ENCODE measurements at regions of chr14 and their contacts with region 1.

Region 1: GRCh38 chr14:94129111-94129757 is at the start of gene IFI27L2:
- DNase-seq: peak; percentile 80
- ATAC-seq: peak; percentile 98
- H3K4me3 ChIP-seq: peak within 1 kb of the TSS; percentile 57 to 85 (median 65)
- H3K4me3 Mint-ChIP-seq: peak within 1 kb of the TSS; percentile 94
- H3K27ac ChIP-seq: peak within 1 kb of the TSS; percentile 35 to 44
- H3K27ac Mint-ChIP-seq: peak within 1 kb of the TSS; percentile 68
- H3K4me1 ChIP-seq: peaks cover 12 to 18% of the 10 kb centered on the region in 2 donors
- H3K4me1 Mint-ChIP-seq: peaks cover 14% of the 10 kb centered on the region
- H3K27me3 ChIP-seq: peaks cover 0 to 4% (median 0%) of the 10 kb centered on the region in 4 experiments
- H3K27me3 Mint-ChIP-seq: peaks cover 10% of the 10 kb centered on the region
- CTCF ChIP-seq: peak; percentile 45
- total RNA-seq, gene IFI27L2: 30.2 and 31.4 TPM in 2 replicates

Region 2: GRCh38 chr14:93655078-93655750 is 474.0 kb before region 1 on chr14:
- CTCF ChIA-PET with region 1: no interaction called
- POLR2A ChIA-PET with region 1: no interaction called
- intact Hi-C with region 1: loop called (anchors 5 kb)
- DNase-seq: peak; percentile 12
- ATAC-seq: no peak
- H3K4me3 ChIP-seq: no peak overlapping the region
- H3K4me3 Mint-ChIP-seq: no peak overlapping the region
- H3K27ac ChIP-seq: no peak overlapping the region
- H3K27ac Mint-ChIP-seq: no peak overlapping the region
- H3K4me1 ChIP-seq: no peaks in the 10 kb centered on the region
- H3K4me1 Mint-ChIP-seq: no peaks in the 10 kb centered on the region
- H3K27me3 ChIP-seq: peaks cover 0 to 12% (median 5%) of the 10 kb centered on the region in 4 experiments
- H3K27me3 Mint-ChIP-seq: peaks cover 27% of the 10 kb centered on the region
- CTCF ChIP-seq: peak; percentile 56

Region 3: GRCh38 chr14:93959239-93960107 is 169.8 kb before region 1 on chr14:
- CTCF ChIA-PET with region 1: no interaction called
- POLR2A ChIA-PET with region 1: no interaction called
- intact Hi-C with region 1: loop called (anchors 5 kb)
- DNase-seq: peak; percentile 92
- ATAC-seq: peak; percentile 71
- H3K4me3 ChIP-seq: peak overlapping the region in 1 of 5 experiments; percentile 19
- H3K4me3 Mint-ChIP-seq: peak overlapping the region; percentile 78
- H3K27ac ChIP-seq: peak overlapping the region; percentile 68 to 75
- H3K27ac Mint-ChIP-seq: peak overlapping the region; percentile 95
- H3K4me1 ChIP-seq: peaks cover 96 to 97% of the 10 kb centered on the region in 2 donors
- H3K4me1 Mint-ChIP-seq: peaks cover 92% of the 10 kb centered on the region
- H3K27me3 ChIP-seq: no peaks in the 10 kb centered on the region
- H3K27me3 Mint-ChIP-seq: no peaks in the 10 kb centered on the region
- CTCF ChIP-seq: no peak

Region 4: GRCh38 chr14:94117856-94118255 is 11.4 kb before region 1 on chr14:
- CTCF ChIA-PET with region 1: interaction called, 10 read pairs
- POLR2A ChIA-PET with region 1: no interaction called
- intact Hi-C with region 1: no loop called
- DNase-seq: no peak
- ATAC-seq: no peak
- H3K4me3 ChIP-seq: no peak overlapping the region
- H3K4me3 Mint-ChIP-seq: no peak overlapping the region
- H3K27ac ChIP-seq: no peak overlapping the region
- H3K27ac Mint-ChIP-seq: no peak overlapping the region
- H3K4me1 ChIP-seq: no peaks in the 10 kb centered on the region
- H3K4me1 Mint-ChIP-seq: no peaks in the 10 kb centered on the region
- H3K27me3 ChIP-seq: peaks cover 0 to 31% (median 0%) of the 10 kb centered on the region in 4 experiments
- H3K27me3 Mint-ChIP-seq: peaks cover 52% of the 10 kb centered on the region
- CTCF ChIP-seq: no peak

Region 5: DNA sequence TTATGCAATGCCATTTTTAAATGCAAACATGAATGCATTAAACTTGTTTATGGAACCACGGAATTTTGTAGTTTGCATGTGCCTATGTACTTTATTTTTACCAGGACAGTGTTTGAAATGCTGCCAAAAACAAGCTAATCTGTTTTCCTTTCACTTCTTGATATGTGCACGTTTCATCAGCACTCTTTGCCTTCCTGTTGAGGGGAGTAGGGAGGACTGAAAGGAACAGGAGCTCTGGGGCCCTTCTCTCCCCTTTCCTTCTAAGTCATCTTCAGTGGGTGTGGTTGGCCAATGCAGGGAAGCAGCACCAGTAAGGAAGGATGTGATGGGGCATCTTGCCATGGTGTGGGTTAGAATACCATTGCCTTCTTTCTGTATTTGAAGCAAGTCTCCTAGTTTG is 32.7 kb after region 1 on chr14:
- CTCF ChIA-PET with region 1: interaction called, 3 read pairs
- POLR2A ChIA-PET with region 1: interaction called, 10 read pairs
- intact Hi-C with region 1: no loop called
- DNase-seq: no peak
- ATAC-seq: no peak
- H3K4me3 ChIP-seq: no peak overlapping the region
- H3K4me3 Mint-ChIP-seq: no peak overlapping the region
- H3K27ac ChIP-seq: no peak overlapping the region
- H3K27ac Mint-ChIP-seq: no peak overlapping the region
- H3K4me1 ChIP-seq: no peaks in the 10 kb centered on the region
- H3K4me1 Mint-ChIP-seq: no peaks in the 10 kb centered on the region
- H3K27me3 ChIP-seq: no peaks in the 10 kb centered on the region
- H3K27me3 Mint-ChIP-seq: peaks cover 43% of the 10 kb centered on the region
- CTCF ChIP-seq: no peak

Region 6: DNA sequence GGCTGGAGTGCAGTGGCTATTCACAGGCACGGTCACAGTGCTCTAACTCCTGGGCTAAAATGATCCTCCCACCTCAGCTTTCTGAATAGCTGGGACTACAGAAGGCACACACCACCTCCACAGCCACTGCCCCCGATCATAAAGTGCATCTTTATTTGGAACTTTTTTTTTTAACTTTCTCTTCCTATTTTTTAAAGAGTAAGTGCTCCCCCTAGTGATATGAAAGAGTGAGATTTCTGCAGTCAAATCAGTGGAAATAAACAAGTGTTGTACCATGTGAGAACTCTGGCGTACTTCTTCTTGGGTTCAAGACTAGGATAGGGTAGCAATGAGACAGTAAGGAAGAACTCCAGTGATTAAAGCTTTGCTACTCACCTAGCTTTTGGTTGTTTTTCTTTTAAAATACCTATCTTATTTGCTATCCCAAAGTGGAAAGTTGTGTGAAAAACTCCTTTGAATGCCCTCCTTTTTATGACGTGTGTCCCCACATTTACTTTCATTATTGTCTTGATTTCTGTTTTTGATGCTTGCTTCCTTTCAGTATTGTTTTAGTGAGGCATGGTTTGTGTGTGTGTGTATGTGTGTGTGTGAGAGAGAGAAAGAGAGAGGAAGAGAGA is 51.5 kb after region 1 on chr14:
- CTCF ChIA-PET with region 1: interaction called, 39 read pairs
- POLR2A ChIA-PET with region 1: interaction called, 8 read pairs
- intact Hi-C with region 1: loop called (anchors 1 kb)
- DNase-seq: peak; percentile 78
- ATAC-seq: peak; percentile 84
- H3K4me3 ChIP-seq: peak overlapping the region in 3 of 5 experiments; percentile 10 to 35 (median 20)
- H3K4me3 Mint-ChIP-seq: peak overlapping the region; percentile 8
- H3K27ac ChIP-seq: no peak overlapping the region
- H3K27ac Mint-ChIP-seq: peak overlapping the region; percentile 4
- H3K4me1 ChIP-seq: peaks cover 5 to 7% of the 10 kb centered on the region in 2 donors
- H3K4me1 Mint-ChIP-seq: peaks cover 6% of the 10 kb centered on the region
- H3K27me3 ChIP-seq: peaks cover 2 to 32% (median 17%) of the 10 kb centered on the region in 4 experiments
- H3K27me3 Mint-ChIP-seq: peaks cover 40% of the 10 kb centered on the region
- CTCF ChIP-seq: peak; percentile 82

Region 7: GRCh38 chr14:94904636-94905035 is 775.4 kb after region 1 on chr14:
- CTCF ChIA-PET with region 1: no interaction called
- POLR2A ChIA-PET with region 1: no interaction called
- intact Hi-C with region 1: no loop called
- DNase-seq: no peak
- ATAC-seq: no peak
- H3K4me3 ChIP-seq: no peak overlapping the region
- H3K4me3 Mint-ChIP-seq: no peak overlapping the region
- H3K27ac ChIP-seq: no peak overlapping the region
- H3K27ac Mint-ChIP-seq: no peak overlapping the region
- H3K4me1 ChIP-seq: no peaks in the 10 kb centered on the region
- H3K4me1 Mint-ChIP-seq: no peaks in the 10 kb centered on the region
- H3K27me3 ChIP-seq: peaks cover 0 to 4% (median 0%) of the 10 kb centered on the region in 4 experiments
- H3K27me3 Mint-ChIP-seq: peaks cover 9% of the 10 kb centered on the region
- CTCF ChIP-seq: no peak

Measured in B cell (primary cell).